Endothelial cell of umbilical vein (primary cell): ENCODE measurements at regions of chr20 and their contacts with region 1.

Region 1: GRCh38 chr20:51372176-51372803 is 170.2 kb downstream of the NFATC2 start:
- DNase-seq: peak; percentile 73
- H3K4me3 ChIP-seq: no peak overlapping the region
- H3K27ac ChIP-seq: no peak overlapping the region
- H3K4me1 ChIP-seq: peaks cover 26% of the 10 kb centered on the region
- H3K27me3 ChIP-seq: no peaks in the 10 kb centered on the region
- CTCF ChIP-seq: peak; percentile 84 to 93
- POLR2A ChIP-seq: no peak

Region 2: GRCh38 chr20:51326201-51326819 is 46.0 kb before region 1 on chr20:
- CTCF ChIA-PET with region 1: interaction called, 9 read pairs
- POLR2A ChIA-PET with region 1: no interaction called
- dilution Hi-C with region 1: no loop called
- intact Hi-C with region 1: loop called (anchors 1 kb)
- DNase-seq: peak; percentile 39
- H3K4me3 ChIP-seq: no peak overlapping the region
- H3K27ac ChIP-seq: no peak overlapping the region
- H3K4me1 ChIP-seq: no peaks in the 10 kb centered on the region
- H3K27me3 ChIP-seq: peaks cover 0 to 9% of the 10 kb centered on the region in 2 experiments
- CTCF ChIP-seq: peak; percentile 64 to 80
- POLR2A ChIP-seq: no peak

Region 3: DNA sequence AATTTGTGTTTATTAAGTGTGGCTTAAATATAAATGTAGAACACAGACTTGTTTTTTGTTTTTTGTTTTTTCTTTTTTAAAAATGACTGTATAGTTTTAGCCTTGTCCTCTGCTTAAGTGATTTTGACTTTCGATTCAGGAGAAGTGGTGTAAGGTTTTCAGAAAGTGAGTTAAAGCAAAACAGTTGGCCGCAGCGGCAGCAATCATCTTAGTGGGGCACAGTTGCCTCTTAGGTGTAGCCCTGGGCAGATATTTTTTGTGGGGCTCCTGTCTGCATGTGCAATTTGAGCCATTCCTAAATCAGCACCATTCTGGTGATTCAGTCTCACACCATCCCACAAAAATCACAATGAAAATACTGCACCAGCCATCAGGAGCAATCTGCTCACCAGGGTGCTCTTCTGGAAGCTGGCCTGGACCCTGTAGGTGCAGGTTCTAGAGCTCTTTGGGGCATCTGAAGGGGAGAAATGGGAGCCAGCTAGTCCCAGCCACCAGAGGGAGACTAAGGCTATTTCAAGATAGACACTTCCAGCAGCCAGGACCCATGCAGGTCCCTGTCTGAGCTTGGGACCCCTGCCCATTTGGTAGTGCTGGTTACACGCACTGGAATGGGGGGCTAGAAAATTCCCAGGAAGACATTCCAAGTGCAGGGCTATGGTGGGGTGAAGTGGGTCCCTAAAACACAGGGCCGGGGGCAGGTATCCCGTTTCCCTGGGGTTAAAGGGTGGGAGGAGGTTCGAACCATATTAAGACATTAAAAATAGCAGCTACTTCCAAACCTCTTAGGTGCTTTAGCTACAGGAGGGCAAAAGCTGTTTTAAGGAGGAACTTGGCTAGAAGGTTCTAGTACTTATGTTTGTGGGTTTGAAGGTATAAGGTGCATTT is 13.6 kb after region 1 on chr20:
- CTCF ChIA-PET with region 1: interaction called, 18 read pairs
- POLR2A ChIA-PET with region 1: no interaction called
- dilution Hi-C with region 1: no loop called
- intact Hi-C with region 1: loop called (anchors 1 kb)
- DNase-seq: peak; percentile 67
- H3K4me3 ChIP-seq: no peak overlapping the region
- H3K27ac ChIP-seq: no peak overlapping the region
- H3K4me1 ChIP-seq: peaks cover 63% of the 10 kb centered on the region
- H3K27me3 ChIP-seq: no peaks in the 10 kb centered on the region
- CTCF ChIP-seq: peak; percentile 52 to 78
- POLR2A ChIP-seq: no peak

Region 4: GRCh38 chr20:51487565-51488268 is 115.4 kb after region 1 on chr20:
- CTCF ChIA-PET with region 1: no interaction called
- POLR2A ChIA-PET with region 1: no interaction called
- dilution Hi-C with region 1: no loop called
- intact Hi-C with region 1: loop called (anchors 1 kb)
- DNase-seq: peak; percentile 50
- H3K4me3 ChIP-seq: no peak overlapping the region
- H3K27ac ChIP-seq: peak overlapping the region; percentile 15
- H3K4me1 ChIP-seq: peaks cover 23% of the 10 kb centered on the region
- H3K27me3 ChIP-seq: no peaks in the 10 kb centered on the region
- CTCF ChIP-seq: no peak
- POLR2A ChIP-seq: no peak

Region 5: GRCh38 chr20:51624157-51624731 is 252.0 kb after region 1 on chr20:
- CTCF ChIA-PET with region 1: interaction called, 50 read pairs
- POLR2A ChIA-PET with region 1: no interaction called
- dilution Hi-C with region 1: no loop called
- intact Hi-C with region 1: loop called (anchors 1 kb)
- DNase-seq: peak; percentile 81
- H3K4me3 ChIP-seq: no peak overlapping the region
- H3K27ac ChIP-seq: peak overlapping the region; percentile 41
- H3K4me1 ChIP-seq: peaks cover 14% of the 10 kb centered on the region
- H3K27me3 ChIP-seq: no peaks in the 10 kb centered on the region
- CTCF ChIP-seq: peak; percentile 82 to 84
- POLR2A ChIP-seq: no peak

Region 6: GRCh38 chr20:52083627-52084232 is 711.4 kb after region 1 on chr20:
- CTCF ChIA-PET with region 1: no interaction called
- POLR2A ChIA-PET with region 1: no interaction called
- dilution Hi-C with region 1: no loop called
- intact Hi-C with region 1: loop called (anchors 5 kb)
- DNase-seq: peak; percentile 75
- H3K4me3 ChIP-seq: no peak overlapping the region
- H3K27ac ChIP-seq: no peak overlapping the region
- H3K4me1 ChIP-seq: no peaks in the 10 kb centered on the region
- H3K27me3 ChIP-seq: no peaks in the 10 kb centered on the region
- CTCF ChIP-seq: peak; percentile 51 to 56
- POLR2A ChIP-seq: no peak